Activated CD4-positive, alpha-beta T cell treated with anti-CD3 and anti-CD28 coated beads for 36 hours (primary cell): ENCODE measurements at regions of chr14 and their contacts with region 1.

Region 1: DNA sequence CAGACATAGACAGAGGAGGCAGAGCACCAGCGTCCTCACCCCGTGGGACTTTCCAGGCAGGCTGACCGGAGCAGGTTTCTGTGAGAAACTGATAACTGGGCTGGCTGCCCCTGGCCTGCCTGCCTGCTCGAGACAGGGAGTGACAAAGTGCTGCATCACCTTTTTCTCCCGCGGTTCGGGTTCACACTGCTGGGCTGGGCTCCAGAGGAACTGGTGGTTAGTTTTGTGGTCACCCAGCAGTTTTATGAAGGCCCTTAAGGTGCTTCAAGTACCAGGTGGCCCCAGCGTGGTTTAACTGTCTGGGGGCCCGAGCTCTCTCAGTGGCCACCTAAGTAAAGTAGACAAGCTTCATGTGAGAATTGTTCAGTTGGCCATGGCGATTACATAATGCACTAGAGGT is 1073.6 kb downstream of the BCL11B start:
- DNase-seq: peak; percentile 66
- ATAC-seq: peak; percentile 20
- H3K4me3 Mint-ChIP-seq: peak overlapping the region; percentile 7
- H3K27ac Mint-ChIP-seq: peak overlapping the region; percentile 83
- H3K4me1 Mint-ChIP-seq: peaks cover 86% of the 10 kb centered on the region
- H3K27me3 Mint-ChIP-seq: no peaks in the 10 kb centered on the region

Region 2: GRCh38 chr14:98018628-98019027 is 179.8 kb before region 1 on chr14:
- CTCF ChIA-PET with region 1: no interaction called
- POLR2A ChIA-PET with region 1: no interaction called
- intact Hi-C with region 1: no loop called
- DNase-seq: peak; percentile 47
- ATAC-seq: peak; percentile 89
- H3K4me3 Mint-ChIP-seq: no peak overlapping the region
- H3K27ac Mint-ChIP-seq: no peak overlapping the region
- H3K4me1 Mint-ChIP-seq: peaks cover 71% of the 10 kb centered on the region
- H3K27me3 Mint-ChIP-seq: no peaks in the 10 kb centered on the region

Region 3: DNA sequence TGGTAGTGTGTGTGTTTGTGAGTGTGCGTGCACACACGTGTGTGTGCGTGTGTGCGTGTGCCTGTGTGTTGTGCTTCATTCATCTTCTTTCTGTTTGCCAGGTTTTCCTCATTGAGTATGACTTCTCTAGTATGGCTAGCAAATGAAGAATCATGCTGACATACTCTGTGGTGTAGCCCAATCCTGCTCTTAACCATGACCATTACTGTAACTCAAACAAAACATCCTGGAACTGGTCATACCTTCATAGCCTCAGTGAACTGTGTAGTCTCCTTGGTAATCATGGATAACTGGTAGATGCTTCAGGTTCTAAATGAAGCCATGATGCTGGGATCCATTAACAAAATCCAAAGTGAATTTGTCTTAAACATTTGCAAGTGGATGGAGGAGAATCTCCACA is 44.1 kb before region 1 on chr14:
- CTCF ChIA-PET with region 1: no interaction called
- POLR2A ChIA-PET with region 1: no interaction called
- intact Hi-C with region 1: loop called in 1 of 2 experiments (anchors 1 kb)
- DNase-seq: no peak
- ATAC-seq: peak; percentile 55
- H3K4me3 Mint-ChIP-seq: no peak overlapping the region
- H3K27ac Mint-ChIP-seq: no peak overlapping the region
- H3K4me1 Mint-ChIP-seq: peaks cover 66% of the 10 kb centered on the region
- H3K27me3 Mint-ChIP-seq: no peaks in the 10 kb centered on the region

Region 4: GRCh38 chr14:98167705-98168104 is 30.7 kb before region 1 on chr14:
- CTCF ChIA-PET with region 1: interaction called, 10 read pairs
- POLR2A ChIA-PET with region 1: interaction called, 9 read pairs
- intact Hi-C with region 1: no loop called
- DNase-seq: peak; percentile 50
- ATAC-seq: no peak
- H3K4me3 Mint-ChIP-seq: peak overlapping the region; percentile 31
- H3K27ac Mint-ChIP-seq: peak overlapping the region; percentile 99
- H3K4me1 Mint-ChIP-seq: peaks cover 92% of the 10 kb centered on the region
- H3K27me3 Mint-ChIP-seq: no peaks in the 10 kb centered on the region

Region 5: GRCh38 chr14:98182393-98183055 is 15.9 kb before region 1 on chr14:
- CTCF ChIA-PET with region 1: interaction called, 12 read pairs
- POLR2A ChIA-PET with region 1: interaction called, 6 read pairs
- intact Hi-C with region 1: no loop called
- DNase-seq: peak; percentile 86
- ATAC-seq: peak; percentile 74
- H3K4me3 Mint-ChIP-seq: peak overlapping the region; percentile 35
- H3K27ac Mint-ChIP-seq: peak overlapping the region; percentile 100
- H3K4me1 Mint-ChIP-seq: peaks cover 96% of the 10 kb centered on the region
- H3K27me3 Mint-ChIP-seq: no peaks in the 10 kb centered on the region

Region 6: GRCh38 chr14:98218218-98218617 is 19.8 kb after region 1 on chr14:
- CTCF ChIA-PET with region 1: interaction called, 3 read pairs
- POLR2A ChIA-PET with region 1: no interaction called
- intact Hi-C with region 1: loop called in 1 of 2 experiments (anchors 2 kb)
- DNase-seq: no peak
- ATAC-seq: no peak
- H3K4me3 Mint-ChIP-seq: no peak overlapping the region
- H3K27ac Mint-ChIP-seq: no peak overlapping the region
- H3K4me1 Mint-ChIP-seq: peaks cover 37% of the 10 kb centered on the region
- H3K27me3 Mint-ChIP-seq: no peaks in the 10 kb centered on the region